SK-MEL-5 (cell line): ENCODE measurements at regions of chr1 and their contacts with region 1.

Region 1: DNA sequence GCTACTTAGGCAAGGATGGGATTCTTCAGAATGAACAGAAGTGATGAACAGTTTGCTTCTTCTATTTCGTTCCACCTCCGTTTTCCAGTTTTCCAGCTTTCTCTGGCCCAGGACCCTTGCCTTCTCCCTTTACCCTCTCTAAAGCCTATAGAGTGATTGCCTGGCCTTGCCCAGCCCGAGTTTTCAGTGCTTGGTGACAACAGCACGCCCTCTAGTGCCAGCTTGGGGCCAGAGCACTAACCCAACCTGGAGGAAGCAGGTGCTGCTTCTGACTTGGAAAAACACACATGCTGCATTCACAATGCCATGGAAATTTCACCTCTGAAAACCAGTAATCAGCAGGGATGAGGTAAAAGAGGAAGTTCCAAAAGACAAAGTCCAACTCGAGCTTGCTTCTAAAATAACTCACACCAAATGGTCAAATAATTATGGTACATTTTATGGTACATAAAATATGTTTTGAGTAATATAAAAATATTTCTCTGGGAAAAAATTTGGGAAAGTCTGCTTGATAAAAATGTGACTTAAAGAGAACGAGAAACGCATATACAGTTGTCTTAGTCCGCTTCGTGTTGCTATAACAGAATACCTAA is 26.1 kb downstream of the UBE2T start:
- DNase-seq: peak; percentile 81

Region 2: GRCh38 chr1:201999625-202000238 is 315.9 kb before region 1 on chr1:
- in situ Hi-C with region 1: no loop called
- DNase-seq: peak; percentile 68

Region 3: GRCh38 chr1:202207292-202207691 is 108.4 kb before region 1 on chr1:
- in situ Hi-C with region 1: loop called (anchors 25 kb)
- DNase-seq: peak; percentile 30

Region 4: DNA sequence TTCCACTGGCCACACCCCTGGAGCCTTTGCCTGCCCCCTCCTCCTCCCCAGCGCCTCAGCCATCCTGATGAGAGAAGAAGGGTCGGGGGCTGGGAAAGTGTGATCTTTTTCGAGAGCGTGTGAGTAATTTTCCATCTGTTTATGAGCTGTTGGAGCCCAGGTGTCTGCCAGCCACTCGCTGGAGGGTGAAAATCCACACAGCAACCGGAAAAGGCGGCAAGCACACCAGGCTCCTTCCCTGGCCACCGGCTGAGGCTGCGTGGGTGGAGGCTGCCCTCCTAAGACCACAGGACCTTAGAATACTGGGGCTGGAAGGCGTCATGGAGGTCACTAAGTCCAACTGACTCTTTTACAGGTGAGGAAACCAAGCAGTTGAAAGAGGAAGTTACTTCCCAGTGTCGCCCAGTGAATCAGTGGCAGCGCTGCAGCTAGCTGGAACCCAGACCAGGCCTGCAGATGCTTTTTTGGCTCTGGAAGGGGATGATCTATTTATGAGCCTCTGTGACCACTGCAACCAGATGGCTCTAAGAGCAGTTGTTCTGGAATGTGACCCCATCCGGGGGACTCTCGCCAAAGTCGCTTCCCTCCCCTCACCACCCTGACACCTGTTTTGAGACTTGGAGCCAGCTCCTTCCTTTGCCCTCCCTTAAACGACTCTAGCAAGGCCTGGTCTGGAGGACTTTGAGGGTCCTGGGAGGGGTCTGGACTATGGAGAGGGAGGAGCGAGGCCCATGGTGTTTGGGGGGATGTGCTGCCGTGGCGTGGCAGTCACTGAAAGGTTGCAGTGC is 67.6 kb before region 1 on chr1:
- in situ Hi-C with region 1: no loop called
- DNase-seq: no peak

Region 5: DNA sequence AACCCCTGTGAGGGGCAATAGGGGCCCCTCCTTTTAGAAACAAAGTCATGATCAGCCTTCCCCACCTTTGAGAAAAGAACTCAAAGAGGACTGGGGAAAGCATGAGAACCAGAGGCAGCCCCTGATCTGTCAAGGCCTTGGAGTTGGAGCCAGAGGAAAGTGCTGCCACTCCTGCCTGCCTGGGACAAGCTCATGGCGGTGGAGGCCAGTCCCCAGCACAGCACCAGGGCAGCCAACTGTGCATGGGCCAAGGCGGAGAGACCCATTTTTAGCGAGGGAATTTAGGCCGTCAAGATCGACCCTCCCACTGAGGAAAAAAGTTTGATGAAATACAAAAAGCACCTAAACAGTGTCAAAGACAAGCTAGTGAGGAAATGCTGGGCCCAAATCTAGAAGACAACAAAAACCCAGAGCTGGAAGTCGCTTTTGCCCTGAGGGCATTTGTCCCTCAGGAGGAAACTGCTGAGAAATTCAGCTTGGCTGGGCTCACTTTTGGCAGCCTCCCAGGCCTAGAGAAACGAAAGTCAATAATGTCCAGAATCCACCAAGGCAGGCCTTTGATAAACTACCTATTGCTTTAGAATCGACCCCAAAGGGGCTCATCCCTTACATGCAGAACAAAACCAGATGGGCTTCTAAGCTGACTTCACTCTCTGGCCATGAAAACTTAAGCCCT is 355.6 kb after region 1 on chr1:
- in situ Hi-C with region 1: no loop called
- DNase-seq: no peak